ENCODE measurements at regions of chr3 and their contacts with region 1.

Region 1: GRCh38 chr3:126679318-126679751 is 24.4 kb upstream of the TXNRD3 start:
- DNase-seq: peak; percentile 4
- ATAC-seq: peak; percentile 98
- H3K4me3 ChIP-seq: no peak overlapping the region
- H3K27ac ChIP-seq: no peak overlapping the region
- H3K4me1 ChIP-seq: 0 out of 2 replicates have a peak, but pooled peaks cover 3% of the 10 kb centered on the region
- H3K27me3 ChIP-seq: peaks cover 0 to 2% of the 10 kb centered on the region in 2 experiments; a peak in 2 of 4 replicates
- CTCF ChIP-seq: peak; percentile 89 to 98 (median 94)
- EP300 ChIP-seq: no peak
- POLR2A ChIP-seq: no peak
- RAD21 ChIP-seq: peak; percentile 82

Region 2: GRCh38 chr3:126668450-126669401 is 10.6 kb before region 1 on chr3:
- CTCF ChIA-PET with region 1: interaction called, 15 read pairs
- POLR2A ChIA-PET with region 1: no interaction called
- RAD21 ChIA-PET with region 1: no interaction called
- SMC1A ChIA-PET with region 1: no interaction called
- in situ Hi-C with region 1: no loop called
- intact Hi-C with region 1: no loop called
- DNase-seq: no peak
- ATAC-seq: no peak
- H3K4me3 ChIP-seq: no peak overlapping the region
- H3K27ac ChIP-seq: no peak overlapping the region
- H3K4me1 ChIP-seq: no peaks in the 10 kb centered on the region
- H3K27me3 ChIP-seq: no peaks in the 10 kb centered on the region
- CTCF ChIP-seq: no peak
- EP300 ChIP-seq: no peak
- POLR2A ChIP-seq: no peak
- RAD21 ChIP-seq: no peak

Region 3: DNA sequence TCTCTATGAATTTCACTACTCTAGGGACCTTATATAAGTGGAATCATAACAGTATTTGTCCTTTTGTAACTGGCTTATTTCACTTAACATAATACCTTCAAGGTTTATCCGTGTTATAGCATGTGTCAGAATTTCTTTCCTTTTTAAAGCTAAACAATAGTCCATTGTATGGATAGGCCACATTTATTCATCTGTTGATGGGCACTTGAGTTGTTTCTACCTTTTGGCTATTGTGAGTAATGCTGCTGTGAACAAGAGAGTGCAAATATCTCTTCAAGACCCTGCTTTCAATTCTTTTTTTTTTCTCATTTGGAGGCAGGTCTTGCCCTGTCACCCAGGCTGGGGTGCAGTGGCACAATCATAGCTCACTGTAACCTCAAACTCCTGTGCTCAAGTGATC is 81.2 kb after region 1 on chr3:
- CTCF ChIA-PET with region 1: no interaction called
- POLR2A ChIA-PET with region 1: no interaction called
- RAD21 ChIA-PET with region 1: no interaction called
- SMC1A ChIA-PET with region 1: no interaction called
- in situ Hi-C with region 1: no loop called
- intact Hi-C with region 1: no loop called
- DNase-seq: no peak
- ATAC-seq: no peak
- H3K4me3 ChIP-seq: no peak overlapping the region
- H3K27ac ChIP-seq: no peak overlapping the region
- H3K4me1 ChIP-seq: no peaks in the 10 kb centered on the region
- H3K27me3 ChIP-seq: no peaks in the 10 kb centered on the region
- CTCF ChIP-seq: no peak
- EP300 ChIP-seq: no peak
- POLR2A ChIP-seq: no peak
- RAD21 ChIP-seq: no peak